ENCODE measurements at regions of chr10 and their contacts with region 1.

Region 1: DNA sequence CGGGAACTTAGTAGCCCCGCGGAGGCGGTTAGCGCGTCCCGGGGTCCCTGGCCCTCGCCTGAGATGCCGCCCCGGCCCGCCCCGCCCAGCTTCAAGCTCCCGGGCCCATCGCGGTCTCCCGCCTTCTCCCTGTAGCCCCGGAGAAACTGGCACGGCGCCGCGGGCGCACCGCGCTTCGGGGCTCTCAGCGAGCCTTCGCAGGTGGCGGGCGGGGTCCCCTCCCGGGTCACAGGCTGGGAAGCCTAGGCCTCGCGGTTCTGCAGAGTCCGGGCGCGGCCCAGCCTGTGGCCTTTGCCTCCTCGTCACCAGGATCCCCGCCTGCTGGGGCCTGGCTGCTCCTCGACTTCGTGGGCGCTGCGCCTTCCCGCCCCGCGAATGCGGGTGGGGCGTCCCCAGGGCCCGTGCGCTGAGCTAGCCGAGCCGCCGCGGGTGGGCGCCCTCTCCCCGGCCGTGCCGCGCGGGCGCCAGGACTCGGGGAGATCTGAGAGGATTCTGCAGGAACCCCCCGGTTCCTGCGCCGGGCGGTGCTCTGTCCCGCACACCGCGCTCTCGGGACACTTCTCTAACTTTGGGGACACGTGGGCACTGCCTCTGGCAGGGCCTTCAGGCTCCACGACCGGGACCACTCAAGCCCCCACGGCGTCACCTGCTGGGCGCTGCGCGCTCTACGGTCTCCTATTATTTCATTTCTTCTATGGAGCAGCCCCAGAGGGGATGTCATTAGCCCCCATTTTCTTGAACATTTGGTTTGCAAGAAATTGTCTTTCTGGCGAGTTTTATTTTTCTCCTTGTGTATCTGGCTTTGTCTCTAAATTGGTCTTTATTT is 682 bp upstream of the RGS10 start:
- DNase-seq: peak; percentile 76
- CTCF ChIP-seq: peak; percentile 74

Region 2: DNA sequence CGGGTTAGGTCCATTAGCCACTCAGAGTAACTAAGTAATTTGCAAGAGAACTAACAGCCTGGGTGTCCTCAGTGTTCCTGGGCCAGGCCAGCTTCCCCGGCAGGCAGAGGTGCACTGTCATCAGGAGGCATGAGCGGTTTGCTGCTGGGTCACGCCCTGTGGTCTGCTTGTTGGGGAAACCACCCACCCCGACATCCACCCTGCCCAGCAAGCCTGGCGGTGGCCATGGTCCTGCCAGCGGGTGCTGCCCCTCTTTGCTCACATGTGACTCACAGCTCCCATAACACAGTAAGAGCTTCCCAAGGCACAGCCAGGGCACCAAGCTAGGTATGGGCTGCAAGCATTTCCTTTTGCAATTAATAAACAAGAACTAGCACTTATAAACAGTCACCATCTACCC is 76.5 kb before region 1 on chr10:
- CTCF ChIA-PET with region 1: no interaction called
- POLR2A ChIA-PET with region 1: no interaction called
- DNase-seq: peak; percentile 59
- CTCF ChIP-seq: no peak

Region 3: GRCh38 chr10:119517235-119518141 is 25.7 kb before region 1 on chr10:
- CTCF ChIA-PET with region 1: interaction called, 12 read pairs
- POLR2A ChIA-PET with region 1: interaction called, 7 read pairs
- DNase-seq: peak; percentile 66
- CTCF ChIP-seq: no peak

Region 4: GRCh38 chr10:119555178-119555784 is 12.1 kb after region 1 on chr10:
- CTCF ChIA-PET with region 1: interaction called, 17 read pairs
- POLR2A ChIA-PET with region 1: no interaction called
- DNase-seq: no peak
- CTCF ChIP-seq: no peak

Region 5: GRCh38 chr10:119725828-119726675 is 182.9 kb after region 1 on chr10 and contains the start of gene INPP5F:
- CTCF ChIA-PET with region 1: no interaction called
- POLR2A ChIA-PET with region 1: no interaction called
- DNase-seq: peak; percentile 100
- CTCF ChIP-seq: peak; percentile 27

Region 6: GRCh38 chr10:119784340-119785070 is 241.3 kb after region 1 on chr10:
- CTCF ChIA-PET with region 1: no interaction called
- POLR2A ChIA-PET with region 1: interaction called, 10 read pairs
- DNase-seq: peak; percentile 38
- CTCF ChIP-seq: no peak

Region 7: GRCh38 chr10:119997429-119997828 is 454.2 kb after region 1 on chr10:
- CTCF ChIA-PET with region 1: no interaction called
- POLR2A ChIA-PET with region 1: no interaction called
- DNase-seq: no peak
- CTCF ChIP-seq: no peak

Measured in GM10248 (cell line).